ENCODE measurements at regions of chr17 and their contacts with region 1.

Region 1: DNA sequence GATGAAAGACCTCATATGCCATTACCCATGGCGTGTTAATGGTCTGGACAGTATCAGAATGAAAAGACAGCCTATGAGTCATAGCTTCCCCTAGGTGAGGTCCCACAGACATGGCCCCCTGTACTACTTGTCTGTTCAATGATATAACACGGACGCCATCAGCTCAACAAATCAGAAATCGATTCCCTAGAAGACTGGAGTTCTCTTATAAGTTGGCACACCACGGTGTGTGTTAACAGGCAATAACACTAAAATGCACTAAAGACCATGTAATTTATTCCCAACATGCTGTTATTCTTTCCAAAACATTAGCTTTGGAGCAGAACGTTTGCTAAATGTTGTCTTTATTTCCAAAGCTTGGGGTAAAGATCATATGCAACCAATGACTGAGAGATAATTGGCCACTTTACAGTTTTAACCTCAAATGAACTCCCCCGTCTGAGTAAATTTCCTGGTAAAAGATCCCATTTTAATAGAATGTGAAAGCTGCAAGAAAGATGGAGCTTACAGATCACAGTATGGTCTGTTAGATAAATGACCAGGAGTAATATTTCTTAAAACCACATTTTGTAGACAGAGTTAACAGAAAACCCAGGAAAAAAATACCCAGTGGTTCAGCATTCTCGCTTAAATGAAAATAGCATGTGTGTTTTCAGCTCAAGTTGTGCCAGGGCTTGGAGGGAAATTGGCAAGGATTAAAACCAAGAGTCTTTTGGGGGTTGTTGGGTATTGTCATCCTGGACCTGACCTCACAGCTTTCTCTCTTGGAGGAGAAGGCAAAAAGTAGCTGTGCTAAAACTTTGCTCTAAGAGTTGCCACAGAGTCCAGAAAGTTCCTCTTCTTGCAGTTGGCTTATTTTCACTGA is 65.9 kb downstream of the PCTP start:
- DNase-seq: peak; percentile 60 to 78 (median 66)
- ATAC-seq: peak; percentile 82
- H3K4me3 ChIP-seq: 0 out of 2 replicates have a peak overlapping the region, but pooled peaks have one; percentile 0
- H3K27ac ChIP-seq: peak overlapping the region; percentile 92
- H3K4me1 ChIP-seq: peaks cover 21 to 64% of the 10 kb centered on the region in 2 experiments; a peak in 4 of 5 replicates
- H3K27me3 ChIP-seq: no peaks in the 10 kb centered on the region
- CTCF ChIP-seq: 0 out of 6 replicates have a peak, but pooled peaks of 1 of the 3 experiments have one; percentile 8
- EP300 ChIP-seq: peak; percentile 100
- POLR2A ChIP-seq: no peak
- RAD21 ChIP-seq: no peak

Region 2: GRCh38 chr17:55783684-55784245 is 33.0 kb before region 1 on chr17:
- CTCF ChIA-PET with region 1: no interaction called
- POLR2A ChIA-PET with region 1: interaction called, 7 read pairs
- in situ Hi-C with region 1: no loop called
- intact Hi-C with region 1: loop called (anchors 5 kb)
- DNase-seq: peak in 1 of 4 experiments; percentile 9
- ATAC-seq: no peak; the same call in 2 of the 3 replicates
- H3K4me3 ChIP-seq: no peak overlapping the region
- H3K27ac ChIP-seq: no peak overlapping the region
- H3K4me1 ChIP-seq: peaks cover 5 to 19% of the 10 kb centered on the region in 2 experiments; a peak in 3 of 5 replicates
- H3K27me3 ChIP-seq: no peaks in the 10 kb centered on the region
- CTCF ChIP-seq: no peak
- EP300 ChIP-seq: no peak
- POLR2A ChIP-seq: no peak
- RAD21 ChIP-seq: no peak

Region 3: GRCh38 chr17:55830699-55831445 is 14.1 kb after region 1 on chr17:
- CTCF ChIA-PET with region 1: no interaction called
- POLR2A ChIA-PET with region 1: interaction called, 27 read pairs
- in situ Hi-C with region 1: no loop called
- intact Hi-C with region 1: no loop called
- DNase-seq: no peak
- ATAC-seq: no peak
- H3K4me3 ChIP-seq: no peak overlapping the region
- H3K27ac ChIP-seq: no peak overlapping the region
- H3K4me1 ChIP-seq: no peaks in the 10 kb centered on the region
- H3K27me3 ChIP-seq: 0 out of 5 replicates have a peak, but pooled peaks cover 0 to 4% of the 10 kb centered on the region in 2 experiments
- CTCF ChIP-seq: no peak
- EP300 ChIP-seq: no peak
- POLR2A ChIP-seq: no peak
- RAD21 ChIP-seq: no peak

Measured in K562 (cell line).